Caco-2 (cell line): ENCODE measurements at regions of chr4 and their contacts with region 1.

Region 1: GRCh38 chr4:107564326-107564725 is 155.7 kb downstream of the PAPSS1 start:
- DNase-seq: peak; percentile 42 to 63
- H3K4me3 ChIP-seq: no peak overlapping the region
- H3K4me3 Mint-ChIP-seq: peak overlapping the region; percentile 37
- H3K27ac Mint-ChIP-seq: peak overlapping the region; percentile 54
- H3K4me1 ChIP-seq: peaks cover 32% of the 10 kb centered on the region
- H3K4me1 Mint-ChIP-seq: peaks cover 31% of the 10 kb centered on the region
- H3K27me3 ChIP-seq: no peaks in the 10 kb centered on the region
- H3K27me3 Mint-ChIP-seq: no peaks in the 10 kb centered on the region
- CTCF ChIP-seq: no peak

Region 2: GRCh38 chr4:107519053-107519452 is 45.3 kb before region 1 on chr4:
- CTCF ChIA-PET with region 1: no interaction called
- POLR2A ChIA-PET with region 1: no interaction called
- intact Hi-C with region 1: no loop called
- DNase-seq: peak in 1 of 2 experiments; percentile 29
- H3K4me3 ChIP-seq: no peak overlapping the region
- H3K4me3 Mint-ChIP-seq: no peak overlapping the region
- H3K27ac Mint-ChIP-seq: no peak overlapping the region
- H3K4me1 ChIP-seq: no peaks in the 10 kb centered on the region
- H3K4me1 Mint-ChIP-seq: no peaks in the 10 kb centered on the region
- H3K27me3 ChIP-seq: no peaks in the 10 kb centered on the region
- H3K27me3 Mint-ChIP-seq: no peaks in the 10 kb centered on the region
- CTCF ChIP-seq: peak; percentile 35 to 56

Region 3: DNA sequence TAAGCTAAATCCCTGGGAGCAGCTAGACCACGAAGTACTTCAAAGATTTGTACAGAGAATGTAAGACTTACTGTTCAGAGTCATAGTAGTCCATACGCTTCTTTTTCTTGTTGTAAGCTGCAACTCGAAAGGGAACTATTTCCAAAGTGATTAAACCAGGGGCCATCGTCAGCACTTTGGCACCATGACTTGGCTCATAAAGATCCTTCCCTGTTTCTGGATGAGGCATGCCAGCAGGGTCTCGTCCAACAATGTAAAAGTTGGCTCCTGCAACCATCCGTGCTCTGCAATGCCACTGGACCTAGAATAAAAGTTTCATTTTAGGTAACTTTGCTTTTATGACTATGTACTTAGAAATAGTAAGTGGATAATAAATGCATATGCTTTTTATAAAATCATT is 67.2 kb after region 1 on chr4:
- CTCF ChIA-PET with region 1: no interaction called
- POLR2A ChIA-PET with region 1: no interaction called
- intact Hi-C with region 1: loop called (anchors 1 kb)
- DNase-seq: no peak
- H3K4me3 ChIP-seq: no peak overlapping the region
- H3K4me3 Mint-ChIP-seq: no peak overlapping the region
- H3K27ac Mint-ChIP-seq: no peak overlapping the region
- H3K4me1 ChIP-seq: peaks cover 27% of the 10 kb centered on the region
- H3K4me1 Mint-ChIP-seq: peaks cover 18% of the 10 kb centered on the region
- H3K27me3 ChIP-seq: no peaks in the 10 kb centered on the region
- H3K27me3 Mint-ChIP-seq: no peaks in the 10 kb centered on the region
- CTCF ChIP-seq: no peak